ENCODE measurements at regions of chr9 and their contacts with region 1.

Region 1: GRCh38 chr9:31347082-31347617 is 1037.3 kb upstream of the ACO1 start:
- DNase-seq: peak in 7 of 9 donors; percentile 58 to 81 (median 72)
- ATAC-seq: peak; percentile 97
- H3K4me3 ChIP-seq: peak overlapping the region; percentile 36
- H3K4me3 Mint-ChIP-seq: peak overlapping the region; percentile 63 to 82 (median 72)
- H3K27ac ChIP-seq: peak overlapping the region; percentile 77
- H3K27ac Mint-ChIP-seq: peak overlapping the region; percentile 93 to 98 (median 96)
- H3K4me1 ChIP-seq: peaks cover 25 to 26% of the 10 kb centered on the region in 2 donors
- H3K4me1 Mint-ChIP-seq: peaks cover 8 to 73% (median 58%) of the 10 kb centered on the region in 7 donors
- H3K27me3 ChIP-seq: no peaks in the 10 kb centered on the region
- H3K27me3 Mint-ChIP-seq: no peaks in the 10 kb centered on the region

Region 2: GRCh38 chr9:31259824-31260223 is 87.3 kb before region 1 on chr9:
- CTCF ChIA-PET with region 1: no interaction called
- POLR2A ChIA-PET with region 1: no interaction called
- intact Hi-C with region 1: loop called in 1 of 2 experiments (anchors 1 kb)
- DNase-seq: peak in 7 of 9 donors; percentile 56 to 85 (median 80)
- ATAC-seq: peak; percentile 97
- H3K4me3 ChIP-seq: no peak overlapping the region
- H3K4me3 Mint-ChIP-seq: peak overlapping the region; percentile 15 to 72 (median 54)
- H3K27ac ChIP-seq: peak overlapping the region; percentile 19
- H3K27ac Mint-ChIP-seq: peak overlapping the region; percentile 3 to 96 (median 87)
- H3K4me1 ChIP-seq: peaks cover 0 to 16% of the 10 kb centered on the region in 2 donors
- H3K4me1 Mint-ChIP-seq: peaks cover 3 to 33% (median 20%) of the 10 kb centered on the region in 7 donors
- H3K27me3 ChIP-seq: no peaks in the 10 kb centered on the region
- H3K27me3 Mint-ChIP-seq: no peaks in the 10 kb centered on the region

Region 3: DNA sequence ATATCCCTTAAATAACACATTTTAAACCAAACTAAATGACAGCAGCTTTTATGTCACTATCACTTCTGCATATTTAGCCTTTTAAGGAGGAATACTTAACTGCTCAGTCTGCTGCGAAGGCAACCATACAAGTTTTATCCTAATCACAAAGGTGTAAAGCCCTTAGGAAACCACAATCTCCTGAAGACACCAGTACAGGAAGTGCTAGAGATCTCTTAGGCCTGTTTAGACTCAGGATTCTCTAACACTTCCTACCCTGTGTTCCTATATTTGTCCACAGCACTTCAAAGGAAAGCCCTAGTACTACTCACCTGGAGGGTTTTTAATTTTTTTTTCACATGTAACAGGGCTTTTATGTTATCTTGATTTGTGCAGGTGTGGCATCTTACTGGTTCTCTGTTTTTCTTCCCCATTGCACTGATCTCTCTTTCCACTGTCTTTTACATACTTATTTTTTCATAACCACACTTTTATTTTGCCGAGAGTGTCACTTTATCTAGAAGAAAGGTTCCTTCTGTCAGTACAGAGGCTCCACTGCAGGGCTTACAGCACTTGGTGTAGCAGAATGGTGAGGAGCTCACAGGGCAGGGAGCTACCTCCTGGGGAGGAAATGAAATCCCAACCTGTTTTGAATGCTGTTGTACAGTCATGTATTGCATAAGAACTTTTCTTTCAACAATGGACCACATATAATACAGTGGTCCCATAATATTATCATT is 23.3 kb before region 1 on chr9:
- CTCF ChIA-PET with region 1: interaction called, 4 read pairs
- POLR2A ChIA-PET with region 1: interaction called, 5 read pairs
- intact Hi-C with region 1: loop called in 1 of 2 experiments (anchors 1 kb)
- DNase-seq: peak in 6 of 9 donors; percentile 35 to 69 (median 55)
- ATAC-seq: peak; percentile 73
- H3K4me3 ChIP-seq: peak overlapping the region; percentile 7
- H3K4me3 Mint-ChIP-seq: peak overlapping the region in 9 of 10 donors; percentile 18 to 72 (median 57)
- H3K27ac ChIP-seq: peak overlapping the region; percentile 49
- H3K27ac Mint-ChIP-seq: peak overlapping the region; percentile 30 to 95 (median 78)
- H3K4me1 ChIP-seq: peaks cover 18 to 32% of the 10 kb centered on the region in 2 donors
- H3K4me1 Mint-ChIP-seq: peaks cover 10 to 53% (median 47%) of the 10 kb centered on the region in 7 donors
- H3K27me3 ChIP-seq: no peaks in the 10 kb centered on the region
- H3K27me3 Mint-ChIP-seq: no peaks in the 10 kb centered on the region

Region 4: GRCh38 chr9:31372799-31373587 is 25.8 kb after region 1 on chr9:
- CTCF ChIA-PET with region 1: no interaction called
- POLR2A ChIA-PET with region 1: no interaction called
- intact Hi-C with region 1: loop called in 1 of 2 experiments (anchors 2 kb)
- DNase-seq: no peak
- ATAC-seq: no peak
- H3K4me3 ChIP-seq: no peak overlapping the region
- H3K4me3 Mint-ChIP-seq: no peak overlapping the region
- H3K27ac ChIP-seq: no peak overlapping the region
- H3K27ac Mint-ChIP-seq: no peak overlapping the region
- H3K4me1 ChIP-seq: no peaks in the 10 kb centered on the region
- H3K4me1 Mint-ChIP-seq: peaks cover 0 to 13% (median 7%) of the 10 kb centered on the region in 7 donors
- H3K27me3 ChIP-seq: no peaks in the 10 kb centered on the region
- H3K27me3 Mint-ChIP-seq: no peaks in the 10 kb centered on the region